ENCODE measurements at regions of chr17 and their contacts with region 1.

Region 1: GRCh38 chr17:8091033-8091687 is 3.6 kb upstream of the ALOX12B start:
- DNase-seq: no peak
- H3K4me3 ChIP-seq: no peak overlapping the region
- H3K27me3 ChIP-seq: peaks cover 25% of the 10 kb centered on the region
- CTCF ChIP-seq: no peak

Region 2: GRCh38 chr17:7982666-7983065 is 108.5 kb before region 1 on chr17:
- CTCF ChIA-PET with region 1: no interaction called
- POLR2A ChIA-PET with region 1: no interaction called
- DNase-seq: no peak
- H3K4me3 ChIP-seq: no peak overlapping the region
- H3K27me3 ChIP-seq: no peaks in the 10 kb centered on the region
- CTCF ChIP-seq: peak; percentile 26

Region 3: GRCh38 chr17:8062807-8063483 is 28.2 kb before region 1 on chr17:
- CTCF ChIA-PET with region 1: interaction called, 12 read pairs
- POLR2A ChIA-PET with region 1: no interaction called
- DNase-seq: no peak
- H3K4me3 ChIP-seq: no peak overlapping the region
- H3K27me3 ChIP-seq: peaks cover 46% of the 10 kb centered on the region
- CTCF ChIP-seq: no peak

Region 4: DNA sequence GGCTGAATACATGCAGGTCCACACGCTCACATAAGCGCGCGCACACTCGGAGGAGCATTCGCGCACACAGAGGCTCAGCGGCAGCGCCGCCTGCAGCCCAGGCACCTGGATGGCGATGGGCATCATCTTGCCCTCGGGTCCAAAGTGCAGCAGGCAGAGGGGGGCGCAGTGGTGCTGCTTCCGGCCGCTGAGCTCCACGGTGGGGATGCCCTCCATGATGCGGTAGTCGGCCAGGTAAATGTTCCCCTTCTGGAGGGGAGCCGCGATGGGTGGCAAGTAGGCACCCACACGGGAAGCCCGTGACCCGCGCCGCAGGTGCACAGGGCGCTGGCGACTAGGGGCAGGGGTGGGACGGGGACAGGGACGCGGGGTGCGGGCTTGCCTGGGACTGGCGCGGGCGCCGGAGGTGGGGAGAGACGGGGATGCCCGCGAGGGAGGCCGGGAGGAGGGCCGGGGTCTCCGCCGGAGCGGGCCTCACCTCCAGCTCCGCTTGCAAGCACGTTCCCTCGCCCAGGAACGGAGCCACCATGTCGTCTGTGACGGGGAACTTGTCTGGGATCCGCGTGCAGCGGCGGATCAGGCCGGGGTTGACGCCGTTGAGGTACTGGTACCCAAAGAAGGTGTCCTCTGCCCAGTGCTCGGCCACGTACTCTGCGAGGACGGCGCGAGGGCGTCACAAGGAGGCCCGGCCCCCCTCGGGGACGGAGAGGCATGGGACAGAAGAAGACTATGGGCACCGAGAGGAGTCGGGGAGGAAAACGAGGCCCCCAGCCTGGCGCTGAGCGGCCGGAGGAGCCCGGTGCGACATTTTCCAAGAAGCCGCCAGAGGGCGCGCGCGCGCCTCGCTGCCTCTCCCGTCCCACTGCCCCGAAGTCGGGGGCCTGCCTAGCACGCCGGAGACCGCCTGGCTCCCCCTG is 11.6 kb before region 1 on chr17:
- CTCF ChIA-PET with region 1: interaction called, 63 read pairs
- POLR2A ChIA-PET with region 1: no interaction called
- DNase-seq: no peak
- H3K4me3 ChIP-seq: peak overlapping the region; percentile 44
- H3K27me3 ChIP-seq: peaks cover 21% of the 10 kb centered on the region
- CTCF ChIP-seq: peak; percentile 95

Region 5: GRCh38 chr17:8109661-8110464 is 18.7 kb after region 1 on chr17:
- CTCF ChIA-PET with region 1: interaction called, 183 read pairs
- POLR2A ChIA-PET with region 1: no interaction called
- DNase-seq: no peak
- H3K4me3 ChIP-seq: no peak overlapping the region
- H3K27me3 ChIP-seq: peaks cover 32% of the 10 kb centered on the region
- CTCF ChIP-seq: peak; percentile 77

Region 6: DNA sequence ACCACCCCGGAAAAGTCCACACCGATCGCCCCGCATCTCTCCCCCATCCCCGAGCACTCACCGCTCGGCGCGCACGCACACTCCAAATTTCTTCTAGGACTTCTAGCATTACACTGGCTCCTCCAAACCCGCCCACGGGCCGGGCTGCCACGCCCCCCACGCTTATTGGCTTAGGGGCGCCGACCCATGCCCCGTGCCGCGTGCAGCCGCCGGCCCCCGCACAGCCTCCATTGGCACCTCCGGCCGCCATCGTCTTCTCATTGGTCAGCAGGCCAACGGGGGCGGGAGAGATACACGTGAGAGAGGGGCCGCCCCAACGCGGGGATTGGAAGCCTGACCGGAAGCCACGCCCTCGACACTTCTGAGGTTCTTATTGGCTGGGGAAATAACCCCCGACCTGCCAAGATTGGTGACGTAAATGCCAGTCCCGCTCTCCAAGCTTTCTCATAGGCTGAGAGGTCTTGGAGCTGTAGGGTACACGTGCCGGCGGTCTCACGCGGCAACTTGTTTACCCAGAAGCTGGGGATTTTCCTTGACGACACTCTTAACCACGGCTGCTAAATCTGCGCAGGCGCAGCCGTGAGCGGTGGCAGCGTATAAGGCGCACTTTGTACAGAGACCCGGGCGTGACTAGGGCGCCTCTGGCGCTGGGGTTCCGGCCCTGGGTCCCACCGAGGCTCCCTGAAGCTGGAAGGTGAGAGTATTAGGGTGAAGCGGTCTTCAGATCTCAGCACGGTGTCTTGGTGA is 65.3 kb after region 1 on chr17:
- CTCF ChIA-PET with region 1: interaction called, 18 read pairs
- POLR2A ChIA-PET with region 1: no interaction called
- DNase-seq: peak; percentile 100
- H3K4me3 ChIP-seq: peak overlapping the region; percentile 48
- H3K27me3 ChIP-seq: no peaks in the 10 kb centered on the region
- CTCF ChIP-seq: 0 out of 2 replicates have a peak, but pooled peaks have one; percentile 7

Region 7: GRCh38 chr17:8300627-8301242 is 209.6 kb after region 1 on chr17:
- CTCF ChIA-PET with region 1: interaction called, 14 read pairs
- POLR2A ChIA-PET with region 1: no interaction called
- DNase-seq: no peak
- H3K4me3 ChIP-seq: no peak overlapping the region
- H3K27me3 ChIP-seq: no peaks in the 10 kb centered on the region
- CTCF ChIP-seq: peak; percentile 85

Measured in BJ (cell line).